Activated naive CD4-positive, alpha-beta T cell treated with anti-CD3 and anti-CD28 coated beads for 36 hours (primary cell): ENCODE measurements at regions of chr9 and their contacts with region 1.

Region 1: DNA sequence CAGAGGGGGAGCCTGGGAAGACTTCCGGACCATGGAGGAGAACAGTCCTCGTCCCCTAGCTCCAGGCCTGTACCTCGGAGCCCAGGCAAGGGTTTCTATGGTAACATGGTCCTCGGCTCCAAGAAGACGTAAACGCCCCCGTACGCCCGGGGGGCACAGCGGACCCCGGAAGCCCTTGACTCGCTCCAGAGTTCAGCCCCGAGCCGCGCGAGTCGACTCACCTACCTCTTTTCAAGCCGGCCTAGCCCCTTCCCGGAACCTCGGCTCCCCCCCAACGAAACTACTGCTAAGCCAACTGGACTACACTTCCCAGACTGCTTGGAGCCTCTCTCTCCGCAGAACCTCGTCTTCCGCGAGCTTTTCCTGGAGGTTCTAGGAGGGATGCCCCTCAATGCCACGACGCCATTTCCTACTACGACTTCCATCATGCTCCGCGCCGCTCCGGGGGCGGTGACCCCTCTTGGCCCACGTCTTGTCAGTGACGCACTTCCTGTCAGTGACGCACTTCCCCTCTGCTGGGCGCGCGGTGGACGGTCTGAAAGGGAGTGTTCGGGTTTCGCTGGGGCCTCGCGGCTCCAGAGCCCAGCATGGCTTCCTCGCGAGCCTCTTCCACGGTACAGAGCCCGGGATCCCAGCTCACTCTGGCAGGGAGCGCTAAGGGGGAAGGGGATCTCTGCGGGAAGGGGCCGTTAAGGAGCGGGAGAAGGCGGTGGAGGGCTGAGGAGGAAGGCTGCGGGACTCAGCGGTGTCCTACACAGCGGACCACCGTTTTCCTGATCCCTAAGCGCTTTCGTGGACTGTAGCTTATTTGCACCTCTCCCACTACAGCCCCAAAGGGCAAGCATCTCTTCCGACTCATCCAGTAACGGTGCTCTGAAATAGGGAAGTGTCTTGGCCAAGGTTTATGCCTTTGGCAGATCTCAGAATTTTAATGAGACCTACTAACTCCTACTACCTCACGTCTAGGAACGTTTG is at the starts of genes CDC26 and PRPF4:
- DNase-seq: peak; percentile 96
- H3K4me3 Mint-ChIP-seq: no peak within 1 kb of the TSS
- H3K27ac Mint-ChIP-seq: no peak within 1 kb of the TSS
- H3K4me1 Mint-ChIP-seq: peaks cover 31% of the 10 kb centered on the region
- H3K27me3 Mint-ChIP-seq: no peaks in the 10 kb centered on the region
- total RNA-seq, gene CDC26: 36.3 to 38.1 TPM
- total RNA-seq, gene PRPF4: 39.9 to 44.3 TPM

Region 2: GRCh38 chr9:112750111-112750767 is 525.2 kb before region 1 on chr9 and contains the start of gene SNX30:
- CTCF ChIA-PET with region 1: no interaction called
- intact Hi-C with region 1: loop called (anchors 5 kb)
- DNase-seq: peak; percentile 84
- H3K4me3 Mint-ChIP-seq: peak within 1 kb of the TSS; percentile 81
- H3K27ac Mint-ChIP-seq: peak within 1 kb of the TSS; percentile 74
- H3K4me1 Mint-ChIP-seq: peaks cover 63% of the 10 kb centered on the region
- H3K27me3 Mint-ChIP-seq: no peaks in the 10 kb centered on the region
- total RNA-seq, gene SNX30: 4.1 to 4.6 TPM

Region 3: DNA sequence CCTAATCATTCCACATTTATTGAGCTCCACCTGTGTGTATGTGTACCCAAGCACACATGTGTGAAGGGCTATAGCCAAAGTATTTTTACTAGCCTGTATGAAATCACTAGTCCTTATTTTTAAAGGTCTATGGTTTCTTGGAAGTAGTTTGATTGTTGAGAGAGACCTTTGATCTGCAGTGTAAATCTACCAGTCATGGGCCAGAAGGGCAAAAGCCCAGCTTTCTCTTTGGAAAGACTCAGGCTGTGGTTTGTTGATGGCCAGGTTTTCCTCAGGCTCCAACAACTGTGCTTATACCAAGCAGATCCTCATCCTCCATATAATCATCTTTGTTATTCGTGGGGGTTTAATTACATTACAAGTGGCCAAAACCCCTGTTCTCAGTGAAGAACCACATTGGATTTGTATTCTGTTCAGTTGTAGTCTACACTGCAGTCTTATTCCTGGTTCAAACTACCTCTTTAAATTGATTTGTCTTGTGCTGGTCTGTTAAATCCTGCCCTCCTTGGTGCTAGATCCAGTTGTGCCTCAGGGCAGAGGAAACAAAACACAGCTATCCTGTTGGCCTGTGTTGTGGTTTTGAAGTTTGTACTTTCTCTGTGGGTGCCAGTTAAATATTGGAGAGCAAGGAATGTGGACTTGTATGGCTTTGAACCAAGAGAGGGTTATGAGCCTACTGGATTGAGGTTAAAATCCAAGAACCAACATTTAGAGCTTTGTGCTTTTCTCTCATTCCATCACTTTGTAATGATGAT is 13.3 kb before region 1 on chr9:
- CTCF ChIA-PET with region 1: interaction called, 27 read pairs
- intact Hi-C with region 1: no loop called
- DNase-seq: no peak
- H3K4me3 Mint-ChIP-seq: no peak overlapping the region
- H3K27ac Mint-ChIP-seq: no peak overlapping the region
- H3K4me1 Mint-ChIP-seq: no peaks in the 10 kb centered on the region
- H3K27me3 Mint-ChIP-seq: no peaks in the 10 kb centered on the region

Region 4: DNA sequence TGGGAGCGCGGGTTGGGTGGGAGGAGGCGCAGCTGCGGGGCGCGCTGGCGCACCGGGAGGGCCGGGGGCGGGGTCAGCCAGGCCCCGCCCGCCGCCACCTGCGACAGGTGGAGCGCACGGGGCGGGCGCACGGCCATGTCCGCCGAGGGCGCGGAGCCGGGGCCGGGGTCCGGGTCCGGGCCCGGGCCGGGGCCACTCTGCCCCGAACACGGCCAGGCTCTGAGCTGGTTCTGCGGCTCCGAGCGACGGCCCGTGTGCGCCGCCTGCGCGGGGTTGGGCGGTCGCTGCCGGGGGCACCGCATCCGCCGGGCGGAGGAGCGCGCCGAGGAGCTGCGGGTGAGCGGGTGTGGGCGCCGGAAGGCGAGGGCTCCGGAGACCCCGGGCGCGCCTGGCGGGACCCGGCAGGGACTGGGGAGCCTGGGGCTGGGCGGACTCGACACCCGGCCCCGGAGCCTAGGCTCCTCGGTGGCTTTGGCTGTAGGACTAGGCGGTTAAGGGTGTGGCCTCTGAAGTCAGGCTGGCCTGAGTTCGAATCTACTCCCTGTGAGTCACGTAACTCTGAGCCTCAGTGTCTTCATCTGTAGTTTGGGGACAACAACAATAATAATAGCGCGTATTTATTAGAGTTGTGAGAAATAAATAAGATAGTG is 74.1 kb after region 1 on chr9 and contains the start of gene BSPRY:
- CTCF ChIA-PET with region 1: interaction called, 8 read pairs
- intact Hi-C with region 1: loop called (anchors 2 kb)
- DNase-seq: peak; percentile 42
- H3K4me3 Mint-ChIP-seq: peak within 1 kb of the TSS; percentile 87
- H3K27ac Mint-ChIP-seq: peak within 1 kb of the TSS; percentile 84
- H3K4me1 Mint-ChIP-seq: peaks cover 61% of the 10 kb centered on the region
- H3K27me3 Mint-ChIP-seq: peaks cover 26% of the 10 kb centered on the region
- total RNA-seq, gene BSPRY: 7.7 to 8.3 TPM

Region 5: DNA sequence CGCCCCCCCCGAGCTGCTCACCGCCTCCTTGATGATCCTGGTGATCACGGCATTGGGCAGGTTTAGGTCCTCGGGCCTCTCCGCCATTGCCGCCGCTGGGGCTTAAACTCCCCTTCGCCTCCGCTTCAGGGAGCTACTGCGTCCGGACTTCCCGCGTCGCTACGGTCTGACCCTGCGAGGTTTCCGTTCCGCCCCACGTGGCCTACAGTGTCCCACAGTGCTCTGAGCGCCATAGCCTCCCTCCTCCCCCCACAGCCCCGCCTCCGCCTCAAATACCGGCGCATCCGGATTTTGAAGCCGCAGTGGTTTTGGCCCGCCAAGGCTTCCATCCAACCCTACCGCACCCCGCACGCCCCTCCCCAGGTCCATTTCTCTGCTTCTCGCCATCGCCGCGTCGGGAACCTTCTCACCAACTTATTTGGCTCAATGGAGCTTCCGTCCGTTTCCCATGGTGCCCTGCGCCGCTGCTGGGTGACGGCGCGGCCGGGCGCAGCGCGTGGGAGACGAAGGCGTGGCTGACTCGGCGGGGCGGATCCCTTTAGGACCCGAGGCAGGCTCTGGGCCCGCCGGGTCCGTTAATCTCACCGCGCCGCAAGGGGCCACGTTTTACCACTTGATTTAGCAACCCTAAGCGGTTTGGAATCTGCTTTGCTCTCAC is 134.9 kb after region 1 on chr9 and contains the starts of genes C9orf43 and POLE3:
- CTCF ChIA-PET with region 1: interaction called, 58 read pairs
- intact Hi-C with region 1: loop called (anchors 1 kb)
- DNase-seq: peak; percentile 97
- H3K4me3 Mint-ChIP-seq: peak within 1 kb of the TSS; percentile 99
- H3K27ac Mint-ChIP-seq: peak within 1 kb of the TSS; percentile 100
- H3K4me1 Mint-ChIP-seq: peaks cover 38% of the 10 kb centered on the region
- H3K27me3 Mint-ChIP-seq: no peaks in the 10 kb centered on the region
- total RNA-seq, gene C9orf43: 0.83 to 0.84 TPM
- total RNA-seq, gene POLE3: 34.1 to 37.4 TPM

Region 6: GRCh38 chr9:113591001-113591898 is 315.8 kb after region 1 on chr9:
- CTCF ChIA-PET with region 1: interaction called, 6 read pairs
- intact Hi-C with region 1: loop called (anchors 2 kb)
- DNase-seq: peak; percentile 85
- H3K4me3 Mint-ChIP-seq: no peak overlapping the region
- H3K27ac Mint-ChIP-seq: no peak overlapping the region
- H3K4me1 Mint-ChIP-seq: peaks cover 37% of the 10 kb centered on the region
- H3K27me3 Mint-ChIP-seq: no peaks in the 10 kb centered on the region